ENCODE measurements at regions of chr17 and their contacts with region 1.

Region 1: GRCh38 chr17:73429440-73430164 is 117.8 kb upstream of the CDC42EP4 start:
- DNase-seq: peak; percentile 97

Region 2: DNA sequence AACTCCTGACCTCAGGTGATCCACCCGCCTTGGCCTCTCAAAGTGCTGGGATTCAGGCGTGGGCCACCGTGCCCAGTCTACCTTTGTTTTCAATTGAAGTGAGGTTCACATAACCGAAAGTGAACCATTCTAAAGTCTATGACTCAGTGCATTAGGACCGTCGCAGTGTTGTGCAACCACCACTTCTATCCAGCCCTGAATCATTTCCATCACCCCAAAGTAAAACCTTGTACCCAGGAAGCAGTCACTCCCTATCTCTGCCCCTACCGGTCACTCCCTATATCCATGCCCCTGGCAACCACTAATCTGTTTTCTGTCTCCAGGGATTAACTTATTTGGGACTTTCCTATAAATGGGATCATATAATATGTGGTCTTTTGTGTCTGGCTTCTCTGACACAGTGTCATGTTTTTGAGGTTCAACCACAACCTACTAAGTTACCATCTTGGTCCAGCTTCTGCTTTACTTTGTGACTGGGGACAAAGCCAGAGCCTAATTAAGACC is 89.5 kb before region 1 on chr17:
- intact Hi-C with region 1: no loop called
- DNase-seq: peak; percentile 86

Region 3: GRCh38 chr17:73379826-73380225 is 49.8 kb before region 1 on chr17:
- intact Hi-C with region 1: no loop called
- DNase-seq: no peak

Region 4: DNA sequence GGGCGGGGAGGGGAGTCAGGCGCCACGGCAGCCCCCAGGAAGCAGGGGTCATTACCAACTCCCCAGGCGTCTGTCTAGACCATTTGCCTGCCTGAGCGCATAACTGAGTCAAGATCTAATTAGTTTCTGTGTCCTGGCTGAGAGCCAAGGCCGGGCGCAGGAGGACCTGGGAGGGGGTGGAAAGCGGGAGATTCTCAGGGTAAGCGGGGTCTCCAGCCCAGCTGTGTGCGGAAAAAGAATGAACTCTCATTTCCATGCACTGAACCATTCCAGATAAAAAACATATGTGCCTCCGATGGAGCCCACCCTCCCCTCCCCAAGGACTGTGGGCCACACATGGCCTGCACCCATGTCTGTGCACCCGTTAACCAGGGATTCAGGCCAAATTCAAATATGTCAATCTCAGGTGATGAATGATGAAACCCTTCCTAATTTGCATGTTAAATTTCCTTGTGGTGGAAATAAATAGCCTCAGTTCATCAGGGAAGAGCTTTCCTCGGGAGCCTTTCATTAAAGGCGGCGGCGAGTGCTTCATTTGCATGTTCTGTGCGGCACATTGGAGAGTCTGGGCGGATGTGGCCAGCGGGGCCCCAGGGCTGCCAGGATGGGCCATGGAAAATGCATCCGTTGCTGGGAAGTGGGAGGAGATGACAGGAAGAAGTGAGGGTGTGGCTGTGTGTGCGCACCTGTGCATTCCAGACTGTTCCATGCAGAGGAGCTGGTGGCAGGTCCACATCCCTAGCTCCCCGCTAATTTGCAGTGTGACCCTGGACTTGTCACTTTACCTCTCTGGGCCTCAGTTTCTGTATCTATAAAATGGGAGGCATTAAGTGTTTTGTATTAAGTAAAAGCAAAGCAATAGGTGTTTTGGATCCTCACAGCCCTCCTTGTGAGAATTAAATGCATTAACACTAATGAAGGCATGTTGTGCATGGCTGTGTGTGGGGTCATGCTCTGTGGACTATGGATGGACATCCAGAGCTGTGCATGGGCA is 63.5 kb after region 1 on chr17:
- intact Hi-C with region 1: no loop called
- DNase-seq: no peak

Region 5: GRCh38 chr17:73546770-73547536 is 117.4 kb after region 1 on chr17:
- intact Hi-C with region 1: no loop called
- DNase-seq: no peak

Region 6: GRCh38 chr17:73710095-73710592 is 280.5 kb after region 1 on chr17:
- intact Hi-C with region 1: loop called (anchors 5 to 10 kb)
- DNase-seq: no peak

Region 7: GRCh38 chr17:73956669-73957465 is 527.3 kb after region 1 on chr17:
- intact Hi-C with region 1: loop called in 1 of 2 experiments (anchors 10 kb)
- DNase-seq: no peak

Region 8: DNA sequence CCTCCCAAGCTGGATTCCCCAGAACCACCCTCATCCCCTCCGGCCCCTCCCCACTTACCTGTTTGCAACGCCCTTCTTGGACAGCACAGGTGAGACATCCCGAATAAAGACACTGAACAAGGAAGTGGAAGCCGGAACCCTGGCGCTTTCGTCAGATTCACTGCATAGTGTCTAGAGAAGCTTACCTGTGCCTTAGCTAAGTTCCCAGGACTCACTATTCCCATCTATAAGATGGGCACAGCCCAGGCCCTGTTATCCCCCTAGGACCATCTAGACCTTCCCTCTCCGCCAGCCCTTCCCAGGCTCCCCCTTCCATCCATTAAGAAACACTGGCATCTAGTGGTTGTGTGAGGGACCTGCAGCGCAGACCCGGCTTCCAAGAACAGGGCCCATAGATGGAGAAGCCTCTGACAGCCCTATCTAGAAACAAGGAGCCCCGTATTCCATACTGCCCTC is 747.0 kb after region 1 on chr17:
- intact Hi-C with region 1: loop called (anchors 5 kb)
- DNase-seq: peak; percentile 86

Measured in posterior vena cava (tissue), 2 donors.